ENCODE measurements at regions of chr4 and their contacts with region 1.

Region 1: DNA sequence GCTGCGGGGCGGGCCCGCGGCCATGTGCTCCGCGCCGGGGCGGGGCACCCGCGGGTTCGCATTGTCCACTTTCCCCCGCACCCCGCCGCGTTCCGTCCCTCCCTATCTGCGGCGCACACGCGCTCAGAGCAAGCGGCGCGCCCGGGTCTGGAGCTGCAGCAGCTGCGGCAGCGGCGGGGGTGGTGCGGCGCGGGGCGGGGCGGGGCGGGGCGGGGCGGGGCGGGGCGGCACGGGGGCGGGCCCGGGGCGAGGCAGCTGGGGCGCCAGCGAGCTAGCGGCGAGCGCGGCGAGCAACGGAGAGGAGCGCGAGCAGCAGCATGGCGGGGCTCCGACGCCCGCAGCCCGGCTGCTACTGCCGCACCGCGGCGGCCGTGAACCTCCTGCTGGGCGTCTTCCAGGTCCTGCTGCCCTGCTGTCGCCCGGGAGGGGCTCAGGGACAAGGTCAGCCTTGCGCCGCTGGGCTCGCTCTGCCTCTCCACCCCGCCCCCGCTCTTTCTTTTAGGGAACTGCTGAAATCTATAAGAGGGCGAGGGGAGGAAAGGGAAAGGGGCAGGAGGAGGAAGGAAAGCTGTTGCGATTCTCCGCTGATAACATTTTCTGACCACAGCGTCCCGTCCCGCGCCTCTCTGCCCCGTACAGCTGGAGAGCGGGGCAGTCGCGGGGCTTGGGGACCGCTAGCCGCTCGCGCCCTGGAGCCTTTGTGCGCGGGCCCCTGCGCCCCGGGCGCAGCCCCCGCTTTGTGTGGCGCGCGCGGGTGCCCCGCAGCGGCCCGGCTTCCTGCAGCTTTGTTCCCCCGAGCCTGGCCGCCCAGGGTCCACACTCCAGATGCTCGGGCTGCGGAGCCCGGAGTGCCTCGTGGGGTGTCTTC is at the start of gene TMEM131L:
- DNase-seq: peak; percentile 72
- H3K4me3 Mint-ChIP-seq: peak within 1 kb of the TSS; percentile 84
- H3K27ac Mint-ChIP-seq: peak within 1 kb of the TSS; percentile 81
- H3K4me1 Mint-ChIP-seq: peaks cover 49% of the 10 kb centered on the region
- H3K27me3 Mint-ChIP-seq: peaks cover 2% of the 10 kb centered on the region
- total RNA-seq, gene TMEM131L: 25.2 to 26.3 TPM

Region 2: DNA sequence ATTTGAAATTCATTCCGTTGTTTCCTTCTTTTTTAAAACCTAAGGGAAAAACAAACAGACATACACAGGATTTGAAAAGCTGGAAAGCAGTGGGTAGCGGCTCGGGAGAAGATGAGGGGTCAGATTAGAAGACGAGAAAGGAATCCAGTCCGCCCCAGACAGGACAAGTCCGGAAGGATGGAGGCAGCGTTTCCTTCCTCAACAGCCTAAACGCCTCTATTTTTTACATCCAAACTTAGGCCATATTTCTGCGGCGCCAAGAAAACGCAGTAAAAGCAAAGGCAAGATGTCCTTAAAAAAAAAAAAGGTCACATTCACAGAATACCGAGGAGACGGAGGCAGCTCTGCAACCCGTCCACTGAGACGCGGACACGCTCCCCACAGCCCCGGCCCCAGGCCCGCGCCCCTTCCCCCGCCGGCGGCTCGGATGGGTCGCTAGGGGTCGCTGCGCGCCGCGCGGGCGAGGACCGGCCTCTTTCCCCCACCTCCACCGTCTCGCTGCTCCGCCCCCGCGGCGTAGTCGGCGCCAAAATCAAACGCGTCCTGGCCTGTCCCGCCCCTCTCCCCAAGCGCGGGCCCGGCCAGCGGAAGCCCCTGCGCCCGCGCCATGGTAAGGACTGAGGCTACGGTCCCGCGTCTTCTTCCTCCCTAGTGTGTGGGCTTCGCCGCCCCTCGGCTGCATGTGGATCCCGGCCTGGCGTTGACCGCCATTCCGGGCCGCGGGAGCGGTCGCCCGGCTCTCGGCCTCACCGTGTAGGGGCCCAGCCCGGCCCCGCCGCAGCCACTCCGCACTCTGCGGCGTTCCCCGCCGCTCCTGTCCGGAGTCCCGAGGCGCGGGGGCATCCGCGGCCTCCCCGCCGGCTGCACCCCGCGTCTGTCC is 121.9 kb before region 1 on chr4 and contains the start of gene MND1:
- CTCF ChIA-PET with region 1: interaction called, 14 read pairs
- POLR2A ChIA-PET with region 1: interaction called, 17 read pairs
- DNase-seq: peak; percentile 93
- H3K4me3 Mint-ChIP-seq: peak within 1 kb of the TSS; percentile 84
- H3K27ac Mint-ChIP-seq: peak within 1 kb of the TSS; percentile 77
- H3K4me1 Mint-ChIP-seq: peaks cover 46% of the 10 kb centered on the region
- H3K27me3 Mint-ChIP-seq: peaks cover 11% of the 10 kb centered on the region
- total RNA-seq, gene MND1: 20.8 to 21.7 TPM

Region 3: GRCh38 chr4:153438916-153439756 is 27.2 kb before region 1 on chr4:
- CTCF ChIA-PET with region 1: interaction called, 56 read pairs
- POLR2A ChIA-PET with region 1: interaction called, 38 read pairs
- DNase-seq: peak; percentile 37
- H3K4me3 Mint-ChIP-seq: peak overlapping the region; percentile 62
- H3K27ac Mint-ChIP-seq: peak overlapping the region; percentile 63
- H3K4me1 Mint-ChIP-seq: peaks cover 26% of the 10 kb centered on the region
- H3K27me3 Mint-ChIP-seq: no peaks in the 10 kb centered on the region

Region 4: GRCh38 chr4:153488006-153488891 is 21.9 kb after region 1 on chr4:
- CTCF ChIA-PET with region 1: interaction called, 12 read pairs
- POLR2A ChIA-PET with region 1: interaction called, 98 read pairs
- DNase-seq: peak; percentile 65
- H3K4me3 Mint-ChIP-seq: peak overlapping the region; percentile 66
- H3K27ac Mint-ChIP-seq: peak overlapping the region; percentile 89
- H3K4me1 Mint-ChIP-seq: peaks cover 75% of the 10 kb centered on the region
- H3K27me3 Mint-ChIP-seq: no peaks in the 10 kb centered on the region

Region 5: DNA sequence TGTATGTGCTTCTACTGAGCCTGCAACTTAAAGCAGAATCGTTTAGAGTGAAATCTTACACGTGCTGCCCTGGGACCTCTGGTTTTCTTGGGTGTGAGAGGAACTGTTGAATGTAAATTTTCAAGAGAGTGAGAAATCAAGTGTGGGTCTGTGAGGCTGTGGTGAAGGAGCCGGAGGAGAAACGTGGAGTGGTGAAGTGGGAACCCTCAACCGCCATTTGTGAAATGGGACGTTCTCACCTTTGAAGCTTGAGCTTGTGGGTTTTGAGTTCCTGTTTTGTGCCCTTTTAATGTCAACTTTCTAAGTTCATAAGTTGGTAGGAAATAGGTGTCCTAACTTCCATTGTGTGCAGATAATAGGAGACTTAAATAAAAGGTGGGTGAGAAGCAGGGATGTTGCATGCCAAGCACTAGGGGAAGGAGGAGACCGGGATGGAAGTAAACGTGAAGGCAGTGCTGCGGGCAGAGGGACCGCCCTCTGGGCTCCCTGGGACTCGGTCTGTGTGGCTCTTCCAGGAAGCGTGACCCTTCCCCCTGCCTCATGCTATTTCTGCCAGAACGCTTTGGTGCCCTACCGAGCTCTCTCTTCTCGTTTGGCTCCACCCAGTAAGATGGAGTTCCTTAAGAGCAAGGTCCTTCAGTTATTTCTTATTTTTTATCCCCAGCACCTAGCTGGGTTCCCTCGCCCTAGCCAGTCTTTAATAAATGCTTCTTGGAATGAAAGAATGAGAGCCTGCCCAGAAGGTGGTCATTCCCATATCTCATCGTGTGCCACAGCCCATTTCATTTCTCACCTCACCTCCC is 55.9 kb after region 1 on chr4:
- CTCF ChIA-PET with region 1: interaction called, 16 read pairs
- POLR2A ChIA-PET with region 1: interaction called, 99 read pairs
- DNase-seq: peak; percentile 79
- H3K4me3 Mint-ChIP-seq: peak overlapping the region; percentile 54
- H3K27ac Mint-ChIP-seq: peak overlapping the region; percentile 91
- H3K4me1 Mint-ChIP-seq: peaks cover 88% of the 10 kb centered on the region
- H3K27me3 Mint-ChIP-seq: no peaks in the 10 kb centered on the region

Region 6: GRCh38 chr4:153573881-153574802 is 107.8 kb after region 1 on chr4:
- CTCF ChIA-PET with region 1: interaction called, 31 read pairs
- POLR2A ChIA-PET with region 1: interaction called, 25 read pairs
- DNase-seq: peak; percentile 77
- H3K4me3 Mint-ChIP-seq: no peak overlapping the region
- H3K27ac Mint-ChIP-seq: peak overlapping the region; percentile 9
- H3K4me1 Mint-ChIP-seq: peaks cover 31% of the 10 kb centered on the region
- H3K27me3 Mint-ChIP-seq: no peaks in the 10 kb centered on the region

Measured in activated CD4-positive, alpha-beta memory T cell treated with anti-CD3 and anti-CD28 coated beads, Interleukin-2, amount 10 ng/mL, durations not matched to agents 7 days and 5 days (primary cell).